Psoas muscle (tissue), 8 donors: ENCODE measurements at regions of chr4 and their contacts with region 1.

Region 1: GRCh38 chr4:41692717-41693345 is 55.7 kb downstream of the PHOX2B start:
- DNase-seq: peak; percentile 21 to 58
- ATAC-seq: peak in 3 of 4 donors; percentile 61 to 81 (median 72)
- H3K4me3 ChIP-seq: no peak overlapping the region
- H3K27ac ChIP-seq: no peak overlapping the region
- H3K4me1 ChIP-seq: no peaks in the 10 kb centered on the region
- H3K27me3 ChIP-seq: no peaks in the 10 kb centered on the region
- CTCF ChIP-seq: peak; percentile 72

Region 2: DNA sequence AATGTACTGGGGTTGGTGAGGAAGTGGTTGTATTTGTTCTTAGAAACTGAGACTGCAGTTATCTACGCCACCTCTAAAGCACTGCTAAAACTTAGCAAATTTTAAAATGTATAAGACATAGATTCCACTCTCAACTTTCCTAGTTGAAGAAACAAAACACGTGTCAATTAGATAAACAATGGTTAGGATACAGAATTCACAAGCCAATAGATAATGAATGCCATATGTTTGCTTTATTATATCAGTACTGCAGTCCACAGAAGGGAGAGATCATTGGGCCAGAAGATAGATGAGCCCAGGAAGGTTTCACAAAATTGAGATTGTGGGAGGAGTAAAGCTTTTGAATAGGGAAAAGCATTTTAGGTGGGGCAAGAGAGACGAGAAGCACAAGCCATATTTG is 256.7 kb after region 1 on chr4:
- intact Hi-C with region 1: loop called in 1 of 2 experiments (anchors 5 kb)
- DNase-seq: no peak
- ATAC-seq: no peak
- H3K4me3 ChIP-seq: no peak overlapping the region
- H3K27ac ChIP-seq: no peak overlapping the region
- H3K4me1 ChIP-seq: no peaks in the 10 kb centered on the region
- H3K27me3 ChIP-seq: no peaks in the 10 kb centered on the region
- CTCF ChIP-seq: no peak